ENCODE measurements at regions of chr5 and their contacts with region 1.

Region 1: GRCh38 chr5:35884115-35884788 is 27.6 kb downstream of the IL7R start:
- DNase-seq: no peak
- H3K4me3 ChIP-seq: no peak overlapping the region
- H3K4me3 Mint-ChIP-seq: peak overlapping the region in 2 of 8 donors; percentile 16 to 17
- H3K27ac ChIP-seq: no peak overlapping the region
- H3K27ac Mint-ChIP-seq: peak overlapping the region in 6 of 7 donors; percentile 9 to 61 (median 36)
- H3K4me1 ChIP-seq: peaks cover 33% of the 10 kb centered on the region
- H3K4me1 Mint-ChIP-seq: peaks cover 32 to 49% (median 39%) of the 10 kb centered on the region in 4 donors
- H3K27me3 ChIP-seq: no peaks in the 10 kb centered on the region
- H3K27me3 Mint-ChIP-seq: no peaks in the 10 kb centered on the region

Region 2: GRCh38 chr5:35717718-35718117 is 166.5 kb before region 1 on chr5:
- CTCF ChIA-PET with region 1: no interaction called
- POLR2A ChIA-PET with region 1: no interaction called
- intact Hi-C with region 1: no loop called
- DNase-seq: no peak
- H3K4me3 ChIP-seq: no peak overlapping the region
- H3K4me3 Mint-ChIP-seq: no peak overlapping the region
- H3K27ac ChIP-seq: no peak overlapping the region
- H3K27ac Mint-ChIP-seq: peak overlapping the region in 1 of 7 donors; percentile 56
- H3K4me1 ChIP-seq: no peaks in the 10 kb centered on the region
- H3K4me1 Mint-ChIP-seq: peaks cover 0 to 3% (median 0%) of the 10 kb centered on the region in 4 donors
- H3K27me3 ChIP-seq: no peaks in the 10 kb centered on the region
- H3K27me3 Mint-ChIP-seq: no peaks in the 10 kb centered on the region

Region 3: GRCh38 chr5:35777358-35778087 is 106.7 kb before region 1 on chr5:
- CTCF ChIA-PET with region 1: interaction called, 39 read pairs
- POLR2A ChIA-PET with region 1: interaction called, 170 read pairs
- intact Hi-C with region 1: no loop called
- DNase-seq: peak; percentile 71 to 76 (median 75)
- H3K4me3 ChIP-seq: no peak overlapping the region
- H3K4me3 Mint-ChIP-seq: peak overlapping the region; percentile 75 to 86 (median 83)
- H3K27ac ChIP-seq: peak overlapping the region; percentile 54
- H3K27ac Mint-ChIP-seq: peak overlapping the region; percentile 81 to 98 (median 96)
- H3K4me1 ChIP-seq: peaks cover 73% of the 10 kb centered on the region
- H3K4me1 Mint-ChIP-seq: peaks cover 57 to 84% (median 69%) of the 10 kb centered on the region in 4 donors
- H3K27me3 ChIP-seq: no peaks in the 10 kb centered on the region
- H3K27me3 Mint-ChIP-seq: no peaks in the 10 kb centered on the region

Region 4: GRCh38 chr5:35803191-35803651 is 81.0 kb before region 1 on chr5:
- CTCF ChIA-PET with region 1: no interaction called
- POLR2A ChIA-PET with region 1: interaction called, 81 read pairs
- intact Hi-C with region 1: no loop called
- DNase-seq: peak in 3 of 5 donors; percentile 40 to 60 (median 50)
- H3K4me3 ChIP-seq: peak overlapping the region in 1 of 2 donors; percentile 11
- H3K4me3 Mint-ChIP-seq: peak overlapping the region in 7 of 8 donors; percentile 58 to 80 (median 68)
- H3K27ac ChIP-seq: peak overlapping the region; percentile 46
- H3K27ac Mint-ChIP-seq: peak overlapping the region; percentile 66 to 93 (median 91)
- H3K4me1 ChIP-seq: peaks cover 67% of the 10 kb centered on the region
- H3K4me1 Mint-ChIP-seq: peaks cover 53 to 88% (median 71%) of the 10 kb centered on the region in 4 donors
- H3K27me3 ChIP-seq: no peaks in the 10 kb centered on the region
- H3K27me3 Mint-ChIP-seq: no peaks in the 10 kb centered on the region

Region 5: DNA sequence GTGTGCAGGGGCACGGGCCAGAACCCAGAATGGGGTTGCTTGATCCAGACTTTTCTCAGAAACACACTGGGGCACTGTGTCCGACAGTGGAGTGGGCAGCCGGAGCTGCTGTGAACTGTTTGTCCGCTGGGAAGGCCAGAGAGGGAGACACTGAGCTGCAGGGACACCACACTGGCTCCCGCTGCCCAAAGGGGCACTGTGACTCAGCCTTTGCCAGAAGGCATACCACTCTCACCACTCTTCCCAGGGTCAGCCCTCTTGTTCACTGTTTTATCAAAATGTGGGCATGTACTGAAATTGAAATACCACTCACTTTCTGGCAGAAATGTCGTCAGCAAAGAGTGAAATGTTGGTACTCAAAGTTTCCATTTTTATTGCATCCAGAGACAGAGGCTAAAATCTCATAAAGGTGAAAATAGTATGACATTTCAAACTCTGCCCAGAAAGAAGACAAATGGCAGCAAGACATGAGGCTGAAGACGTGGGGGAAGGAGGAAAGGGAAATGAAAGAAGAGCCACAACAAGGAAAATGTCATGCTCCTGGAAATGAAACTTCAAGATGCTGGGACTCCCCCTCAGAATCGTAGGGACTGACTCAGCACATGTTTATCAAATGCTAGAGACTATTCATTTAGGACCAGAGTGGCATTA is 32.0 kb before region 1 on chr5:
- CTCF ChIA-PET with region 1: interaction called, 3 read pairs
- POLR2A ChIA-PET with region 1: interaction called, 437 read pairs
- intact Hi-C with region 1: no loop called
- DNase-seq: peak; percentile 60 to 81 (median 62)
- H3K4me3 ChIP-seq: peak overlapping the region; percentile 54 to 71
- H3K4me3 Mint-ChIP-seq: peak overlapping the region; percentile 87 to 99 (median 95)
- H3K27ac ChIP-seq: peak overlapping the region; percentile 97
- H3K27ac Mint-ChIP-seq: peak overlapping the region; percentile 94 to 100 (median 100)
- H3K4me1 ChIP-seq: peaks cover 75% of the 10 kb centered on the region
- H3K4me1 Mint-ChIP-seq: peaks cover 52 to 85% (median 70%) of the 10 kb centered on the region in 4 donors
- H3K27me3 ChIP-seq: no peaks in the 10 kb centered on the region
- H3K27me3 Mint-ChIP-seq: no peaks in the 10 kb centered on the region

Region 6: GRCh38 chr5:35908228-35908627 is 24.0 kb after region 1 on chr5:
- CTCF ChIA-PET with region 1: interaction called, 3 read pairs
- POLR2A ChIA-PET with region 1: interaction called, 92 read pairs
- intact Hi-C with region 1: loop called (anchors 2 kb)
- DNase-seq: no peak
- H3K4me3 ChIP-seq: no peak overlapping the region
- H3K4me3 Mint-ChIP-seq: no peak overlapping the region
- H3K27ac ChIP-seq: no peak overlapping the region
- H3K27ac Mint-ChIP-seq: peak overlapping the region in 1 of 7 donors; percentile 24
- H3K4me1 ChIP-seq: no peaks in the 10 kb centered on the region
- H3K4me1 Mint-ChIP-seq: peaks cover 3 to 27% (median 17%) of the 10 kb centered on the region in 4 donors
- H3K27me3 ChIP-seq: no peaks in the 10 kb centered on the region
- H3K27me3 Mint-ChIP-seq: no peaks in the 10 kb centered on the region

Measured in CD4-positive, alpha-beta memory T cell (primary cell).